Ascending aorta (tissue), 2 donors: ENCODE measurements at regions of chr17 and their contacts with region 1.

Region 1: GRCh38 chr17:48618256-48618897 is 3.3 kb upstream of the HOXB8 start:
- DNase-seq: peak; percentile 36 to 93
- H3K4me3 ChIP-seq: peak overlapping the region in 1 of 2 donors; percentile 28
- H3K27ac ChIP-seq: no peak overlapping the region
- H3K4me1 ChIP-seq: peaks cover 4 to 9% of the 10 kb centered on the region in 2 donors
- H3K27me3 ChIP-seq: peaks cover 36% of the 10 kb centered on the region
- CTCF ChIP-seq: peak; percentile 92 to 98 (median 98)

Region 2: GRCh38 chr17:48335858-48336500 is 282.4 kb before region 1 on chr17:
- intact Hi-C with region 1: loop called (anchors 2 kb)
- DNase-seq: no peak
- H3K4me3 ChIP-seq: no peak overlapping the region
- H3K27ac ChIP-seq: no peak overlapping the region
- H3K4me1 ChIP-seq: no peaks in the 10 kb centered on the region
- H3K27me3 ChIP-seq: no peaks in the 10 kb centered on the region
- CTCF ChIP-seq: peak; percentile 59 to 72 (median 68)

Region 3: GRCh38 chr17:48351831-48352332 is 266.5 kb before region 1 on chr17:
- intact Hi-C with region 1: loop called (anchors 2 kb)
- DNase-seq: no peak
- H3K4me3 ChIP-seq: no peak overlapping the region
- H3K27ac ChIP-seq: no peak overlapping the region
- H3K4me1 ChIP-seq: no peaks in the 10 kb centered on the region
- H3K27me3 ChIP-seq: no peaks in the 10 kb centered on the region
- CTCF ChIP-seq: peak; percentile 50 to 77 (median 67)

Region 4: GRCh38 chr17:48555258-48556228 is 62.8 kb before region 1 on chr17:
- intact Hi-C with region 1: no loop called
- DNase-seq: no peak
- H3K4me3 ChIP-seq: peak overlapping the region; percentile 71 to 80
- H3K27ac ChIP-seq: peak overlapping the region; percentile 84 to 97
- H3K4me1 ChIP-seq: peaks cover 15 to 64% of the 10 kb centered on the region in 2 donors
- H3K27me3 ChIP-seq: no peaks in the 10 kb centered on the region
- CTCF ChIP-seq: peak in 1 of 3 experiments; percentile 27